ENCODE measurements at regions of chr10 and their contacts with region 1.

Region 1: DNA sequence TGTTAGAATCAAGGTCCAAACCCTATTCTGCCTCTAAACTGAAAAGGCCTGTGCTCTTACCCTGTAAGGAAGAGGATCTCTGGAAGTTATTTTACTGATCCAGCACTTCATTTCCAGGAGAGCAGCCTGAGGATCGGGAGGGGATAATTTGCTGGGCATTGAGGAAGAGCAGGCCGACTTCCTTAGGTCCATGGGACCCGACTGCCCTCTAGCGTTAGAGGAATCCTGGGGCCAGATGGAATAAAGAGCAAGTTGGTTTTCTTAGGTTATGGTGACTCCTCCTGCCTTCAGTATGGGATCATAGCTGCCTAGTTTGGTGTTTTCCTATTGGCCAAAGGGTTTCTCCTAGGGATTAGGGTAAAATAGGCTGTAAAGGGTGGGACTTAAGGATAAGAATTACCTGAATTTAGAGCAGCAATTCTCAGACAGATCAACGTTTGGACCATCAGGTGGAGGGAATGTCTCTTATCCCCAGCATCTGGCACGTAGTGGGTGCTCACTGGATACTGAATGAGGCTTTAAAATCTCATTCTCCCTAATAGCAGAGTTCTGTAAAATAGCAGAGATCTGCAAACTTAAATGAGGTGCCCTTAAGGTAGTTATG is 40.0 kb upstream of the SORBS1 start:
- DNase-seq: no peak
- H3K4me3 ChIP-seq: no peak overlapping the region
- H3K27ac ChIP-seq: no peak overlapping the region
- H3K4me1 ChIP-seq: peaks cover 9% of the 10 kb centered on the region
- H3K27me3 ChIP-seq: no peaks in the 10 kb centered on the region
- CTCF ChIP-seq: peak; percentile 92 to 97 (median 95)
- POLR2A ChIP-seq: no peak

Region 2: GRCh38 chr10:95246579-95247051 is 354.6 kb before region 1 on chr10:
- intact Hi-C with region 1: loop called (anchors 10 kb)
- DNase-seq: peak in 1 of 2 donors; percentile 88
- H3K4me3 ChIP-seq: no peak overlapping the region
- H3K27ac ChIP-seq: peak overlapping the region; percentile 63
- H3K4me1 ChIP-seq: peaks cover 29% of the 10 kb centered on the region
- H3K27me3 ChIP-seq: no peaks in the 10 kb centered on the region
- CTCF ChIP-seq: peak; percentile 55 to 83 (median 82)
- POLR2A ChIP-seq: no peak

Region 3: GRCh38 chr10:95374597-95375209 is 226.5 kb before region 1 on chr10:
- intact Hi-C with region 1: loop called (anchors 5 kb)
- DNase-seq: no peak
- H3K4me3 ChIP-seq: no peak overlapping the region
- H3K27ac ChIP-seq: no peak overlapping the region
- H3K4me1 ChIP-seq: peaks cover 5% of the 10 kb centered on the region
- H3K27me3 ChIP-seq: no peaks in the 10 kb centered on the region
- CTCF ChIP-seq: peak; percentile 70 to 95 (median 82)
- POLR2A ChIP-seq: no peak

Region 4: DNA sequence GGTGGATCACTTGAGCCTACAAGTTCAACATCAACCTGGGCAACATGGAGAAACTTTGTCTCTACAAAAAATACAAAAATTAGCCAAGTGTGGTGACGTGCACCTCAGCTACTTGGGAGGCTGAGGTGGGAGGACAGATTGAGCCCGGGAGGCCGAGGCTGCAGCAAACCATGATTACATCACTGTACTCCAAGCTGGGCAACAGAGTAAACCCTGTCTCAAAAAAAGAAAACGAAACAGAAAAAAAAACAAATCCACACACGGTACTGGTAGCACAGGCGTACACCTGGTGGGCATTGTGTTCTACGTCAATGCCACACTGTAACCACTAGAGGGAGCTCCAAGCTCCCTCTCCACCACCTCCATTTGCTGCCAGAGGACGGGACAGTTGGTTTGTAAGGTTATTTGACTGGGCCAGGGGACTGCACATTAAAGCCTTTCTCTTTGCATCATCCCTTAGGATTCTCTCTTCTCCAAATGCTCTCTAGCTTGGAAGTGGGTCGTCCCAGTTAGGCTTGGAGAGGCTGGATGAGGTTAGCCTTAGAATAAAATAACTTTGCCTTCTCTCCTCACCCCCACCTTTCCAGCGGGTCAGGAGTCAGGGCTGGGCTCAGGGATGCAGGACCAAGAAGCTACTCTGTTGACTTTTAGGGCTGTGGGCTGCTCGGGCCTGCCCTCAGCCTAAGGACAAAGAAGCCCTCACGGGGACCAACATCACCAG is 170.8 kb before region 1 on chr10:
- intact Hi-C with region 1: loop called (anchors 5 kb)
- DNase-seq: no peak
- H3K4me3 ChIP-seq: no peak overlapping the region
- H3K27ac ChIP-seq: peak overlapping the region; percentile 60
- H3K4me1 ChIP-seq: peaks cover 16% of the 10 kb centered on the region
- H3K27me3 ChIP-seq: no peaks in the 10 kb centered on the region
- CTCF ChIP-seq: peak; percentile 85 to 93 (median 88)
- POLR2A ChIP-seq: no peak

Region 5: DNA sequence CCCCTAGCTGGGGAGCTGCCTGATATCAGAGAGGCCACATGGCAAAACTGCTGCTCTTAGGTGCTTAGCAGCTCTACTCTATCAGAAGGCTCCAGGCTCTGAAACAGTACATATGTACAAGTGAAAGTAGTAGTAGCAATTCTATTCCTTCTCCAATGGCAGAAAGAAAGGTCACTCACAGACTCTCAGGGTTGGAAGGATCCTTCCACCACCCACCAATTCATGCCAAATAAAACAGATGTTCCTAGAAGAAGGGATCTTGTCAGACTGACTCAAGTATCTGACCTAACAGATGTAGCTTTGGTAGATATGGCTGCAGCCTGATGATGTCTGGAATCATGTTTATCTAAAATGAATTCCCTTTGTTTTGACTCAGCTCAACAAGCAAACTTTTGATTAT is 63.3 kb after region 1 on chr10:
- intact Hi-C with region 1: no loop called
- DNase-seq: no peak
- H3K4me3 ChIP-seq: no peak overlapping the region
- H3K27ac ChIP-seq: no peak overlapping the region
- H3K4me1 ChIP-seq: no peaks in the 10 kb centered on the region
- H3K27me3 ChIP-seq: no peaks in the 10 kb centered on the region
- CTCF ChIP-seq: no peak
- POLR2A ChIP-seq: no peak